Activated T-helper 2 cell treated with anti-CD3 and anti-CD28 coated beads, Interferon-gamma antibody, Interleukin-2, Interleukin-4, amounts not matched to agents 10 μg/mL and 5 μg/mL and 100 μg/mL, durations not matched to agents 14 hours and 24 hours and 36 hours (primary cell): ENCODE measurements at regions of chr15 and their contacts with region 1.

Region 1: GRCh38 chr15:88454867-88455810 is 12.0 kb downstream of the MRPL46 start:
- DNase-seq: no peak
- H3K4me3 Mint-ChIP-seq: no peak overlapping the region
- H3K27ac Mint-ChIP-seq: no peak overlapping the region
- H3K4me1 Mint-ChIP-seq: peaks cover 2% of the 10 kb centered on the region
- H3K27me3 Mint-ChIP-seq: no peaks in the 10 kb centered on the region

Region 2: GRCh38 chr15:88246666-88247446 is 208.3 kb before region 1 on chr15:
- intact Hi-C with region 1: loop called (anchors 5 kb)
- DNase-seq: peak; percentile 58
- H3K4me3 Mint-ChIP-seq: no peak overlapping the region
- H3K27ac Mint-ChIP-seq: no peak overlapping the region
- H3K4me1 Mint-ChIP-seq: peaks cover 2% of the 10 kb centered on the region
- H3K27me3 Mint-ChIP-seq: peaks cover 20% of the 10 kb centered on the region

Region 3: GRCh38 chr15:88274553-88275460 is 180.3 kb before region 1 on chr15:
- intact Hi-C with region 1: loop called (anchors 5 kb)
- DNase-seq: peak; percentile 39
- H3K4me3 Mint-ChIP-seq: no peak overlapping the region
- H3K27ac Mint-ChIP-seq: no peak overlapping the region
- H3K4me1 Mint-ChIP-seq: no peaks in the 10 kb centered on the region
- H3K27me3 Mint-ChIP-seq: peaks cover 12% of the 10 kb centered on the region

Region 4: GRCh38 chr15:88331280-88331679 is 123.9 kb before region 1 on chr15:
- intact Hi-C with region 1: loop called (anchors 2 kb)
- DNase-seq: peak; percentile 24
- H3K4me3 Mint-ChIP-seq: no peak overlapping the region
- H3K27ac Mint-ChIP-seq: no peak overlapping the region
- H3K4me1 Mint-ChIP-seq: no peaks in the 10 kb centered on the region
- H3K27me3 Mint-ChIP-seq: peaks cover 7% of the 10 kb centered on the region